Esophagus squamous epithelium (tissue), 5 donors: ENCODE measurements at regions of chr6 and their contacts with region 1.

Region 1: DNA sequence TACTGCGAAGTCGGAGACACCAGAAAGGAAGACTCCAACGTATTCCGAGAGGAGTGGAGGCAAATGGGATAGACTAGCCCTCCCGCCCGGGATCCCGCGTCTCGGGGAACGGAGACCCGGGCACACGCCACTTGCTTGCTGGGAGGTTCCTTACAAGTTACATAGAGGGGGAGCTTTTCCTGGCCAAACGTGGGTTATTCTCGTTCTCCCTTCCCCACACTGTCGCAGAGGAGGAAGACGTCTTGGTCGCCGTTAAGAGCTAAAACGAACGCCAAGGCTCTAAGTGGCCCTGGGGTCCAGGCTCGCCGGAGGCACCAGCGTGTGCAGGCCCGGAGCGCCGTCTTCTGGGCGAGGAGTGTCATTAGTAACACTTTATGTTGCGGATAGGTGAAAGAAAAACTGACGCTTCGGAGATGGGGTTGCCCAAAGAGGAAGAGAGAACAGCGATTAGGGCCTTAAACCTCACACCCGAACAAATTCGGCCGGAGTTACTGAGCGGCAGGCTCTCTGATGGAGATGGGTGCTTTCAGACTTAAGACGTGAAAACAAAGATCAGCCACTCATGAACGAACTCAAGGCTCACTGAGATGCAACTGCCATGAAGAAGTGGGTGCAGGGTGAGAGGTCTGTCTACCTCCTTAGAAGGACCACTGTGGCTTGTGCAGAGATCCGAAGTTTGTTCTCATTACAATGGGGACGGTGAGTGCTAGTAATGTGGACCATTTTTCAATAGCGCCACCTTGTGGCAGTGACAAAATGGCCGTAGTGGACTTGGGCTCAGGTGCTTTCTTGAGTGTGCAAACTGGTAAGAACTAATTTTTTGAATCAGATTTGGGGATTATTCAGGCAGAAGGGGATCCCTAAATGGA is 11.7 kb upstream of the ZNF311 start:
- DNase-seq: no peak
- H3K4me3 ChIP-seq: peak overlapping the region; percentile 20 to 67 (median 51)
- H3K27ac ChIP-seq: peak overlapping the region in 3 of 4 donors; percentile 1 to 43 (median 19)
- H3K4me1 ChIP-seq: peaks cover 0 to 13% (median 3%) of the 10 kb centered on the region in 3 donors
- H3K27me3 ChIP-seq: peaks cover 0 to 56% (median 0%) of the 10 kb centered on the region in 4 donors
- CTCF ChIP-seq: peak; percentile 71 to 89 (median 82)
- POLR2A ChIP-seq: no peak

Region 2: GRCh38 chr6:28683944-28684538 is 332.8 kb before region 1 on chr6:
- intact Hi-C with region 1: loop called (anchors 5 kb)
- DNase-seq: no peak
- H3K4me3 ChIP-seq: no peak overlapping the region
- H3K27ac ChIP-seq: no peak overlapping the region
- H3K4me1 ChIP-seq: peaks cover 0 to 6% (median 0%) of the 10 kb centered on the region in 3 donors
- H3K27me3 ChIP-seq: peaks cover 0 to 93% (median 0%) of the 10 kb centered on the region in 4 donors
- CTCF ChIP-seq: peak; percentile 15 to 60 (median 46)
- POLR2A ChIP-seq: no peak

Region 3: GRCh38 chr6:28838634-28839442 is 178.0 kb before region 1 on chr6:
- intact Hi-C with region 1: loop called (anchors 2 kb)
- DNase-seq: no peak
- H3K4me3 ChIP-seq: peak overlapping the region; percentile 52 to 73 (median 69)
- H3K27ac ChIP-seq: peak overlapping the region; percentile 59 to 84 (median 82)
- H3K4me1 ChIP-seq: peaks cover 4 to 31% (median 6%) of the 10 kb centered on the region in 3 donors
- H3K27me3 ChIP-seq: peaks cover 0 to 53% (median 2%) of the 10 kb centered on the region in 4 donors
- CTCF ChIP-seq: peak; percentile 26 to 69 (median 49)
- POLR2A ChIP-seq: no peak

Region 4: GRCh38 chr6:29071831-29072723 is 55.3 kb after region 1 on chr6:
- intact Hi-C with region 1: no loop called
- DNase-seq: no peak
- H3K4me3 ChIP-seq: no peak overlapping the region
- H3K27ac ChIP-seq: no peak overlapping the region
- H3K4me1 ChIP-seq: no peaks in the 10 kb centered on the region
- H3K27me3 ChIP-seq: peaks cover 0 to 4% (median 0%) of the 10 kb centered on the region in 4 donors
- CTCF ChIP-seq: peak in 4 of 6 experiments; percentile 5 to 45 (median 8)
- POLR2A ChIP-seq: no peak